ENCODE measurements at regions of chr2 and their contacts with region 1.

Region 1: GRCh38 chr2:99489761-99490622 is at the start of gene REV1:
- DNase-seq: peak; percentile 96
- ATAC-seq: peak; percentile 96
- total RNA-seq, gene REV1: 75.2 TPM

Region 2: GRCh38 chr2:97728091-97728731 is 1761.8 kb before region 1 on chr2:
- intact Hi-C with region 1: no loop called
- DNase-seq: peak; percentile 33
- ATAC-seq: no peak

Region 3: DNA sequence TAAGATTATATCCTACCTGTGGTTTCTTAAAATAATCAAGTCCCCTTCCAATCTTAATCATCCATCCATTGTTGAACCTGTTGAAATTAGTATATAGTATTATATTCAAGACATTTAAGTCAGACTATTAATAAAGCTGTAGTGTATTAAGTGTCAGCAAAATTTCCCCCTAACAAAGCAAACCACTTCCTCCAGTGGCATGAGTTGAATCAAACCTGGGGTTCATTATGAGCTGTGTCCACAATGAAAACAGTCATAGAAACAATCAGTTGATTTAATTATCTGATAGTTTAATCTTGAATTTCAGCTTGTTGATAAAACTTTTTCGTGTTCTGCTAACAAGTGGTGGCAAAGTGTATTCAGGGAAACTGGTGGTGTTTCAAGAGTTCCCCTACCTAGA is 320.5 kb before region 1 on chr2:
- intact Hi-C with region 1: loop called (anchors 10 kb)
- DNase-seq: no peak
- ATAC-seq: no peak

Region 4: GRCh38 chr2:99442837-99443236 is 47.2 kb before region 1 on chr2:
- intact Hi-C with region 1: no loop called
- DNase-seq: no peak
- ATAC-seq: peak; percentile 73